Breast epithelium (tissue), 4 donors: ENCODE measurements at regions of chr3 and their contacts with region 1.

Region 1: DNA sequence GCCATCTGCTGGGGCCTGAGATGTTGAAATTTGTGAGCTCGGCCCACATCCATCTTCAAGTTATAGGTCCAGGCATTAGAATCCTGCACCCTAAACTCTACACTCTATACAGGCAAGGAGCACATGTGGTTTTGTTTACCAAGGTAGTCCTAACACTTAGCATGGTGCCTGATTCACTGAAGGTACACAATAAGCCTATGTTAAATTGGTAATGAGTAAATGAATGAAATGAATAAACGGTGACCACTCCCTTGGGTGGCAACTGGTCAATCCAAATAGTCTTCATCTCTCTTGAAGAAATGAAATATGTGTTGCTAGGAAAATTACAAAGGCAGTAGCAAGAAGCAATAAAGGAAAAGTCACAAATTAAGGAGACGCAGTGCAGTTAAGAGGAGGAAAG is 359.3 kb upstream of the UBE2E2 start:
- DNase-seq: no peak
- H3K4me3 ChIP-seq: no peak overlapping the region
- H3K27ac ChIP-seq: no peak overlapping the region
- H3K4me1 ChIP-seq: no peaks in the 10 kb centered on the region
- H3K27me3 ChIP-seq: no peaks in the 10 kb centered on the region
- CTCF ChIP-seq: no peak
- POLR2A ChIP-seq: no peak

Region 2: GRCh38 chr3:23239211-23240068 is 395.6 kb after region 1 on chr3:
- intact Hi-C with region 1: loop called (anchors 5 kb)
- DNase-seq: no peak
- H3K4me3 ChIP-seq: no peak overlapping the region
- H3K27ac ChIP-seq: no peak overlapping the region
- H3K4me1 ChIP-seq: no peaks in the 10 kb centered on the region
- H3K27me3 ChIP-seq: no peaks in the 10 kb centered on the region
- CTCF ChIP-seq: no peak
- POLR2A ChIP-seq: no peak